CD8-positive, alpha-beta T cell (primary cell): ENCODE measurements at regions of chr20 and their contacts with region 1.

Region 1: DNA sequence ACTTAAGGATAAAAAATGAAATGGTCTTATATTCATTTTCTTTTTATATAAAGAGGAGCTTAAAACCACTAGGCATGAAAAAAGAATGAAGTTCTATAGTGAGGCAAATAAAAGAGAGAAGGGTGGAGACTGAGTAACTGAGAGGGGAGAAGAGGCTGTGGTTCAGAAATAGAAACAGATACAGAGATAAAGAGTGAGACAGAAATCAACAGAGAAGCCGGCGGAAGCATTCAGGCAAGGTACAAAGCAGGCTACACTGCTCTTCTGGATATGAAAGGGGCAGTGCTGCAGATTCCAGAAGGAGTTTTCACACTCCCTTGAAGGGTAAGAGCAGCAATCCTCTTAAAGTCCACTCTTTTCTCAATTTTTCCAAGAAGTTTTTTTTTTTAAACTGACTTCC is 29.9 kb downstream of the NFATC2 start:
- DNase-seq: peak in 2 of 9 experiments; percentile 39 to 56
- ATAC-seq: peak; percentile 75
- H3K4me3 ChIP-seq: no peak overlapping the region
- H3K4me3 Mint-ChIP-seq: peak overlapping the region; percentile 13
- H3K27ac ChIP-seq: peak overlapping the region in 1 of 2 experiments; percentile 63
- H3K27ac Mint-ChIP-seq: peak overlapping the region; percentile 89
- H3K4me1 ChIP-seq: peaks cover 55% of the 10 kb centered on the region
- H3K4me1 Mint-ChIP-seq: peaks cover 70% of the 10 kb centered on the region
- H3K27me3 ChIP-seq: no peaks in the 10 kb centered on the region
- H3K27me3 Mint-ChIP-seq: no peaks in the 10 kb centered on the region
- CTCF ChIP-seq: no peak

Region 2: DNA sequence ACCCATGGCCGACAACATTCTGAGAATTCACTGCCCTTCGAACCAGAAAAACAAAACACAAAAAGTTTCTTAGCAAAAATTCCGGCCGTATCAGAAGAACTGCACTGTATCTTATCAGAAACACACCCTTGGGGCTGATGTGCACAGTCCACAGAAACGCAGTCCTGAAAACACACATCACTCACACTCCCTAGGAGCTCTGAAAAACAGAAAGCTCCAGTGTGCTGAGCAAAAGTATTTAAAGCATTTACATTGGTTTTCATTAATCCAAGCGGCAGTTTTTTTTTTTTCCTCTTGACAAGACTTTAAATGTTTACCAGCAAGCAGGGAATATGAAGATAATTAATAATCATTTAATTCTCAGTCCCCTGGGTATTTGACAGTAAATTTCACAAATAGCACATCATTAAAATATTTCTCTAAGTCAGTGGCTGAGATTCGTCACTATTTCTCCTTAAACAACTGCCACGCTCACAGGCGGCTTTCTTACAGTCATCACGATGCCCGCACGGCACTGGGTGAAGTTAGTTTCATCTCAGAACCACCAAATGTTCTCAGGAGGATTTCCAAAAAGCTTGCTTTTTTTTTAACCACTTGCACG is 16.5 kb after region 1 on chr20:
- CTCF ChIA-PET with region 1: interaction called, 3 read pairs
- POLR2A ChIA-PET with region 1: no interaction called
- intact Hi-C with region 1: loop called in 1 of 2 experiments (anchors 2 kb)
- DNase-seq: peak in 5 of 9 experiments; percentile 26 to 70 (median 44)
- ATAC-seq: peak; percentile 3
- H3K4me3 ChIP-seq: peak overlapping the region in 1 of 2 experiments; percentile 10
- H3K4me3 Mint-ChIP-seq: peak overlapping the region; percentile 58
- H3K27ac ChIP-seq: peak overlapping the region; percentile 19 to 81
- H3K27ac Mint-ChIP-seq: peak overlapping the region; percentile 83
- H3K4me1 ChIP-seq: peaks cover 96% of the 10 kb centered on the region
- H3K4me1 Mint-ChIP-seq: peaks cover 92% of the 10 kb centered on the region
- H3K27me3 ChIP-seq: no peaks in the 10 kb centered on the region
- H3K27me3 Mint-ChIP-seq: no peaks in the 10 kb centered on the region
- CTCF ChIP-seq: no peak